ENCODE measurements at regions of chr1 and their contacts with region 1.

Region 1: DNA sequence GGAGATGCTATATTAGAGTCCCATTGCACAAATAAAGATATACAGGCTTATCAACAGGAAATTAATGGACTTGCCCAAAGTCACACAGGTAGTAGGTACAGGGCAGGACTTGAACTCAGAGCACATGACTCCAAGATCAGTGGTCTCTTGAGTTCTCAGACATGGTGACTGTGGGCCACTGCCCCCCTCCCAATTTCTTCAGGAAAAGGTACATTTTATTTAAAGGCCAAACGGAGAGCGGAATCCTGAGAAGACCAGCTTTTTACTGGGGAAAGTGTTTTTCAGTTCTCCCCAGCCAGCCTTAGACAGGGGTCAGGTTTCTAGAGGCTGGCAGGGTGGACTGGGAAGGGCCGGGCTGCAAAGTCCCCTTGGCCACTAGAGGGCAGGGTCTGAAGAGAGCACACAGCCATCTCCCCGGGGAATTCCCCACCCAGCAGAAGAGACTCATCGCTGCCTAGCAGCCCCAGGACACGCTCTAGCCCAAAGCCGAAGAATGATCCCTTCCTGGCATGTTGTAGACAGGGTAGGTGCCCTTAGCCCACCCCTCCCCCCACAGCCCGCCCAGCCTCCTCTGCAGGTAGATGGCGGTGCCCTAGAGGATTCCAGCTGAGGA is 29.7 kb downstream of the ACP6 start:
- DNase-seq: peak; percentile 90
- ATAC-seq: peak; percentile 100
- H3K4me3 Mint-ChIP-seq: no peak overlapping the region
- H3K27ac Mint-ChIP-seq: no peak overlapping the region
- H3K4me1 Mint-ChIP-seq: peaks cover 21% of the 10 kb centered on the region
- H3K27me3 Mint-ChIP-seq: no peaks in the 10 kb centered on the region
- CTCF ChIP-seq: peak; percentile 89

Region 2: DNA sequence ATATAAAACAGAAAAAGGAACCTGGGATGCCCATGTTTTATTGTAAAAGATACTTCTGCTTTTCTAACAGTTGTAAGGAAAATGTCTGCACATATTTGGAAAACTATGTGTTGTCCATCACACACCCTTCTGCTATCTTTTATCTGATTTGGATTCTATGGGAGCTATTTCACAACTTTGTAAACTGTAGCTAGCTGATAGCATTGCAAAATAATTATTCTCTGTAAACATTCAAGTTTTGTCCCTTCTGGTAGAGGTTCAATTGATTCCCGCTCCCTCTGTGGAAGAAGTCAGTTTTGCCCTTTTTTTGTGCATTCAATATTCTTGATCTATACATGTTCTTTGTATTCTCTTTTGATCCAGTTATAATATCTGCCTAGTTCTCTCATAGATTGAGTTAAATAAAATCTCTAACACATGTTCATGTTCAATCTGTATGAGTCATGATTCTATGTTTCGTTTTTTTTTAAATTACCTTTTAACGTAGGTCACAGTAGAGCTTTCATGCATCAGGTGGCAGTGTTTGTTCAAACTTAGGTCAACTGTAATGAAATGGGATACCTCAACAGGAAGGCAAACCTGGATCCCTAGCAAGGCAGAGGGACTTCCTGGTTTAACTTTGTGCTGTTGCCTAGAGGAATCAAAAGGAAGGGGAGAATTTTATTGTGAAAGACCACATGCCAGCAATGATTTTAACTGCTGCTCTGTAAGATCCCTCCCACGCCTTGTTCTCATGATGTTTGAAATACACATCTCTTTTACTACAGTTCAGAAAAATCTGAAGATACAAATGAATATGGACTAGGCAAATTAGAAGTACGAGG is 125.4 kb before region 1 on chr1:
- CTCF ChIA-PET with region 1: interaction called, 11 read pairs
- POLR2A ChIA-PET with region 1: no interaction called
- intact Hi-C with region 1: no loop called
- DNase-seq: peak; percentile 17
- ATAC-seq: peak; percentile 77
- H3K4me3 Mint-ChIP-seq: no peak overlapping the region
- H3K27ac Mint-ChIP-seq: peak overlapping the region; percentile 56
- H3K4me1 Mint-ChIP-seq: peaks cover 15% of the 10 kb centered on the region
- H3K27me3 Mint-ChIP-seq: peaks cover 4% of the 10 kb centered on the region
- CTCF ChIP-seq: no peak

Region 3: DNA sequence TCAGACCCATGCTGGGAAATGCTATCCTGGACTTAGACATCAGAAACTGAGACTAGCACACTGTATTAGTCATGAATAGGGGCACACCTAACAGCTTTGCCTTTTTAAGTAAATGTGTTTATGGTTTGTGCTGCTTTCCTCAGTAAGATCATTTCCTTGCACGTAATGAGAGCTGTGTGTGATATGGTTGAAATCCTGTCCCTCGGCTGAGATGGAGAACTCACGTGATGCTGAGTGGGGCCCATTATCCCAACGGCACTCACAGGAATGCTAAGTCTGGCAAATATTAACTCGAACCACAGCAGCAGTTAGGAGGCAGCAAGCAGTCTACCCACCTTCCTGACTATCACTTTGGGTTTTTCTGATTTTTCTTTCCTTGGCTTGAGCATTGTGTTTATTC is 61.1 kb before region 1 on chr1:
- CTCF ChIA-PET with region 1: no interaction called
- POLR2A ChIA-PET with region 1: no interaction called
- intact Hi-C with region 1: no loop called
- DNase-seq: no peak
- ATAC-seq: peak; percentile 73
- H3K4me3 Mint-ChIP-seq: peak overlapping the region; percentile 30
- H3K27ac Mint-ChIP-seq: peak overlapping the region; percentile 69
- H3K4me1 Mint-ChIP-seq: peaks cover 64% of the 10 kb centered on the region
- H3K27me3 Mint-ChIP-seq: peaks cover 23% of the 10 kb centered on the region
- CTCF ChIP-seq: no peak

Region 4: GRCh38 chr1:147700042-147701006 is 59.7 kb after region 1 on chr1:
- CTCF ChIA-PET with region 1: interaction called, 5 read pairs
- POLR2A ChIA-PET with region 1: no interaction called
- intact Hi-C with region 1: loop called (anchors 5 kb)
- DNase-seq: peak; percentile 74
- ATAC-seq: peak; percentile 95
- H3K4me3 Mint-ChIP-seq: no peak overlapping the region
- H3K27ac Mint-ChIP-seq: no peak overlapping the region
- H3K4me1 Mint-ChIP-seq: peaks cover 5% of the 10 kb centered on the region
- H3K27me3 Mint-ChIP-seq: peaks cover 16% of the 10 kb centered on the region
- CTCF ChIP-seq: peak; percentile 75

Region 5: DNA sequence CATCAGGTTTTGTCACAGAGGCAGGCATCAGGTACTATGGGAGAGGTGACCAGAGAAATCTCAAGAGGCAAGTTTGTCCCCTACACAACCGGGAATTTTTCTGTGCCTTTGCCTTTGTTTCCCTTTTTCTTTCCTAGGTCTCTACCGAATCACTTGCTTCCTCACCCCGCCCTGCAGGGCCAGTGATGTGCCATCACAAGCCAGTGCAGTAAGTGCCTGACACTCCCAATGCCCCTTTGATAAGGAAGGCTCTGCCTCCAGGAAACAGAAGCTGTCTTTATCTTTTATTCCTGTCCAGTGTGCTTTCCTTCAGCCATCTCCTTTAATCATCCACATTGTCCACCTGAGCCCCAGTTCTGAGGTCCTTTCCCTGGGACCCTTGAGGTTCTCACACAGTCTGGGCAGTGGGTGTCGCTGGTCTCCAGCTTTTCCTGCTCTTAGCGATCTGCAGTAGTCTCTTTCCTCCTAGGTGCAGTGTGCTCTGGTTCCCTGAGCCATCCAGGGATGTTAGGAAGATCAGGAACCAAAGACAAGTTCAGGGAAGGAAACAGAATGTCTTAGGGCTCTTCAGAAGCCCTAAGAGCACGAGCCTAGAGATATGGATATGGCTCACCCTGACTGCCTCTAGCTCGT is 83.1 kb after region 1 on chr1:
- CTCF ChIA-PET with region 1: no interaction called
- POLR2A ChIA-PET with region 1: no interaction called
- intact Hi-C with region 1: no loop called
- DNase-seq: peak; percentile 27
- ATAC-seq: peak; percentile 65
- H3K4me3 Mint-ChIP-seq: no peak overlapping the region
- H3K27ac Mint-ChIP-seq: no peak overlapping the region
- H3K4me1 Mint-ChIP-seq: no peaks in the 10 kb centered on the region
- H3K27me3 Mint-ChIP-seq: peaks cover 18% of the 10 kb centered on the region
- CTCF ChIP-seq: no peak

Measured in activated CD8-positive, alpha-beta T cell treated with anti-CD3 and anti-CD28 coated beads for 36 hours (primary cell).